Left cardiac atrium (tissue), 4 donors: ENCODE measurements at regions of chr9 and their contacts with region 1.

Region 1: DNA sequence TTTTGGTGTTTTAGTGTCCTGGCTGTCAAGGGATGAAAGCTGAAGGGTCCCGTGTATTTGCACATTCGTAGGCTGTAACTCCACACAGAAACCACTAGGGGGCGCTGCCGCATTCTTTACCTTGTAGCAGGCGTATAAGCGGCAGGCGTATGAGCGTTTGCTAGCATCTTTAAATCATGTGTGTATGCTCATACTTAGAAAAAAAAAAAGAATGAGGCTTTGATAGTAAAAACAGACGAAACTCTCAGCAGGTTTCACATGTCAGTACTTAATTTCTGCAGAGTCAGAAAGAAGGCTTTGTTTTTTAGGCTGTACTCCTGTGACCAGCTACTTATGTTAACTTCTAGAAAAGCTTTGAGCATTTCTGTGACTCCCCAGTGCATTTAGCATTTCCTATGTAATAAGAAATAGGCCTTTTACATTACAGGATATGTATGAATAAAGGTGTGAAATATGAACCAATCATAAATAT is 218.8 kb upstream of the ADAMTSL1 start:
- DNase-seq: peak; percentile 80
- ATAC-seq: peak; percentile 86 to 88

Region 2: DNA sequence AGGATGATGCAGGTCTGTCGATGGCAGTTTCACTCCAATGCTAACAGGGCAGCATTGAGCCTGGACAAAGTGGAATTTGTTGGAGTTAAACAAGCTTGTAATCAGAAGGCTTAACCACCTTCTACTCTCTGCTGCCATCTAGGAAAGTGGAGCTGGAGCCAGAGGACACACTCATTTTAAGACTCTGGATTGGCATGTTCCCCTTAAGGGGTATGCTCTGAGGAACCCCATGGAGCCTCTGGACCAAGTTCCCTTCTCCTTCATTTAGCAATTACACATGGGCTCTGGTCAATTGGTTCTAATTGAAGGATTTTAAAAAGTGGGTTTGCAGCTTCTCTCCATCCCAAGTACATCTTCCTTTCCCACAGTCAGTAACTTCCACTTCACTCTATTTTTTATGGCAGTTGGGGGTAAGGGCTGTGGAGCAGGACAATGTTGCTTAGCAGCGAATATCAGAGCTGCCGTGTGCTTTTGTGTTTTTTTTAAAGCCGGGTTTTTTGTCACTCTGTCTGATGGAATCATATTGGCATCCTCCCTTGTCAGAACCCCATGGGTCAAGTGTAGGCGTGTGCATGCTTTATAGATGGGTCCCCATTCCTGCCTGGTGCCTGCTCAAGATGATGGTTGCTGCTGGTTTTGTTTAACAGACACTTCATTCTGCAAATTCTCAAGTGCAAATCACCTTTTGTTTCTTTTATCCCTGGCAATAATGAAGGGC is 112.0 kb before region 1 on chr9:
- intact Hi-C with region 1: no loop called
- DNase-seq: no peak
- ATAC-seq: no peak

Region 3: DNA sequence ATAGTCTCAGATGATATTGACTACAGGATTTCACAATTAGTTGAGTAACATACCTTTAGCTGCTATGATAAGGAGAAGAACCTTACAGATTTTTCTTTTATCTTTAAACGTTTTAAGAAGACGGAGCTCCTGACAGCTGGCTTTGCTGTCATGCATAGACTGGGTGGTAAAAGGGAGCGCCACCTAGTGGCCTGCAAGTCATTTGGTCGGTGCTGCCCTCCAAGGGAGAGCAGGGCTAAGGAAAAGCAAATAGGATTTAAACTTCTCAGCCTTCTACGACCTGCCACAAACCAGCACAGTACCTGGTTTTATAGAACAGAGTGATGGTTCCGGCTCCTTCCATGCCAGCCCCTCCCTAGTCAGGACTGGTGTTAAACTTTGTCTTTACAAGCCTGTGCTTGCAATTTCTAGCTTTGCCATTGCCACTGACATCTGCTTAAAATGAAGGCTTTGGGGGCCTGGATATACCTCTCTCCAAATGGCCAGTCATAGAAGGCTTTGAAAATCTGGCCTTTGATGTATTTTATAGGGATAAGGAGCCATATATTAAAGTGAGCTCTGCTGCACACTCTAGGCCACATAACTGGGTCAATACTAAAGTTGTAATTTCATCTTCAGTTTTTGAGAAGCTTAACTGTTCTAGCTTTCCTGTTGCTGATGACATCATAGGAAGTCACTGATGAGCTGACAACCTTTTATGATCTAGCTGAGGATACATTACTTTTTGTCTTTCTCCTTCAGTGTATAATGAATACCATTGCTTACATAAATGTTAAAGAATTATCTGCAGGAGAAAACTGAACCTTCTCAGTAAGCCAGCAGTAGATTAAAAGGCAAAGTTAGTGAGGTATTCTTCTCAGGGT is 187.7 kb after region 1 on chr9:
- intact Hi-C with region 1: loop called (anchors 1 to 5 kb)
- DNase-seq: peak; percentile 82
- ATAC-seq: peak; percentile 56 to 78

Region 4: DNA sequence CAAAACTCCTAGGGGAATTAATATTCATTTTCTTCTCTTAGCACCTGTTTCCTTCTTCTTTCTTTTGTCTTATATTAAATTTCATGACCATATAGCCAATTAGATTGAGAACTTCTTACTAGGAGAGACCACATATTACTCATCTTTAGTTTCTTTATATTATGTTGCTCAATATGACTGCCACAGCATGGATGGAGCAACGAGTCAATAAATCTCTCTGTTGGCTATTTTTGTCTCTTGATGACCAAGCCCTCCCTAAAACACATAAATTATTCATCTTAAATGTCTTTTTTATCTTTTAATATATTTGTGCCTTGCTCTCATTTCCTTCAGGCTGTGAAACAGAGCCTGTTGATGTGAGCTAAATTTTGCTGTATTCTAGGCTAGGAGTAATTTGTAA is 341.7 kb after region 1 on chr9:
- intact Hi-C with region 1: no loop called
- DNase-seq: no peak
- ATAC-seq: no peak

Region 5: DNA sequence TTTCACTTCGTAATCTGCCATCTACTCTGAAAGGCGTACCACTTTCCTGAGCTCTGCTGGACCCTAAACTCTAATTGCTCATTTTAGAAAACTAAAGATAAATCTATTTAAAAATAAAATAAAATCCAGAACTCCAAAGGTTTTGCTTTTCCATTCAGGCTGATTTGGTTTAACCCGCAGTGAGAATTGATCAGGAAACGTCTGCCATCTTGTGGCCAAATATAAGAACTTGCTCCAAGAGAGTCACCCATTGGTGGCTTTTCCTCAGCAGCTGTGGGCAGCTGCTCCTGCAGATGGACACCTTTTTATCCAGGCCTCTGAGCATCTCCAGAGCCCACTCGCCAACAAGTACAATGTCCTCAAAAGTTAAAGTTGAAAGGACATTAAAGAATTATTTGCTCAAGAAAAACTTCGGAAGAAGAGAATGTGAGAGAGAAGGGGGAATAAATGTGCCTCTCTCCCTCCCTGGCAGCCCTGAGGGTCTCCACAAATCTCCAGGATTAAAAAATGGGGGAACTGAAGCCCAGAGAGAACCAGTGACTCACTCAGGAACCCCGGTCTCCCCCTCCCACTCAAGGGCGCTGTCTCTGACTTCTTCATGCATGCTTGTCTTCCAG is 773.7 kb after region 1 on chr9:
- intact Hi-C with region 1: loop called (anchors 2 to 10 kb)
- DNase-seq: no peak
- ATAC-seq: peak; percentile 66 to 70

Region 6: DNA sequence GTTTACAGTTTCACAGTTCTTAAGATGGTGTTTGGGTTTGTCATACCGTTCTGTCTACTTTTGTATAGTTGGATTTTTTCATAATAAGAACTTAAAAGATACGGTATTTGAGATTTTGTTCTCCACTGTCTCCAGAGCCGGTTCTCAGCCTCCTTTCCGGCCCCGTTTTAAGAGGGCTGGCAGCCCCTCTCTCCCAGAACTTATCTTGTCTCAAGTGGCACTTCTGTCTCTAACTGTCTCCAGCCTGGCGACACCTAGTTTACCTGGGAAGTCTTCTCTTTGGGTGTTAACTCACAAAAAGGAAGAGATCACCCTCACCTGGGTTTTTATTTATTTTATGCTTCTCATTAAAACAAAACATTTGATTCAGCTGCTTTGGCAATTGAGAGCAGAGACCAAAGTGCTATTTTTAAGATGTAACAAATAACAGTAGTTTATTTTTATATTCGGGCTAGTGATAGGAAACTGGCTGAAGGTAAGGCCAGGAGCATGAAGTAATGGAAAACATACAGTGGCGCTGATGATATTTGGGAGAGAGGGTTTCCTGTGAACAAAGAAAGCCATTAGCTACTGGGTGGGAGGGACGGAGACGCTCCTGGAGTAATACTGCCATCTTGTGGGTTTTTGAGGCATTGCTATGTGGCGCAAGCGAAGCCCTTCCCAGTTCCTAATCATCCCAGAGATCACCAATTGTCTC is 1202.0 kb after region 1 on chr9:
- intact Hi-C with region 1: loop called in 1 of 2 experiments (anchors 10 kb)
- DNase-seq: peak; percentile 55
- ATAC-seq: peak; percentile 92 to 97